Naive thymus-derived CD4-positive, alpha-beta T cell (primary cell): ENCODE measurements at regions of chr19 and their contacts with region 1.

Region 1: GRCh38 chr19:12551060-12551832 is at the start of gene ZNF564:
- DNase-seq: peak; percentile 74 to 97 (median 95)
- ATAC-seq: peak; percentile 99
- H3K4me3 ChIP-seq: peak within 1 kb of the TSS; percentile 88
- H3K4me3 Mint-ChIP-seq: peak within 1 kb of the TSS; percentile 89 to 100 (median 98)
- H3K27ac ChIP-seq: peak within 1 kb of the TSS; percentile 90
- H3K27ac Mint-ChIP-seq: peak within 1 kb of the TSS; percentile 92 to 98 (median 95)
- H3K4me1 ChIP-seq: peaks cover 8 to 28% of the 10 kb centered on the region in 2 donors
- H3K4me1 Mint-ChIP-seq: peaks cover 29 to 55% (median 47%) of the 10 kb centered on the region in 7 donors
- H3K27me3 ChIP-seq: no peaks in the 10 kb centered on the region
- H3K27me3 Mint-ChIP-seq: peaks cover 0 to 4% (median 0%) of the 10 kb centered on the region in 5 donors
- total RNA-seq, gene ZNF564: 10.5 to 33.6 (median 19.0) TPM

Region 2: GRCh38 chr19:11924886-11925650 is 626.2 kb before region 1 on chr19 and contains the start of gene ZNF700:
- CTCF ChIA-PET with region 1: no interaction called
- POLR2A ChIA-PET with region 1: no interaction called
- intact Hi-C with region 1: loop called in 1 of 2 experiments (anchors 5 kb)
- DNase-seq: peak; percentile 67 to 93 (median 90)
- ATAC-seq: peak; percentile 94
- H3K4me3 ChIP-seq: peak within 1 kb of the TSS; percentile 98
- H3K4me3 Mint-ChIP-seq: peak within 1 kb of the TSS; percentile 91 to 99 (median 98)
- H3K27ac ChIP-seq: peak within 1 kb of the TSS; percentile 75
- H3K27ac Mint-ChIP-seq: peak within 1 kb of the TSS; percentile 93 to 99 (median 98)
- H3K4me1 ChIP-seq: peaks cover 6 to 10% of the 10 kb centered on the region in 2 donors
- H3K4me1 Mint-ChIP-seq: peaks cover 26 to 56% (median 39%) of the 10 kb centered on the region in 7 donors
- H3K27me3 ChIP-seq: no peaks in the 10 kb centered on the region
- H3K27me3 Mint-ChIP-seq: no peaks in the 10 kb centered on the region
- total RNA-seq, gene ZNF700: 18.0 to 26.4 (median 22.8) TPM

Region 3: DNA sequence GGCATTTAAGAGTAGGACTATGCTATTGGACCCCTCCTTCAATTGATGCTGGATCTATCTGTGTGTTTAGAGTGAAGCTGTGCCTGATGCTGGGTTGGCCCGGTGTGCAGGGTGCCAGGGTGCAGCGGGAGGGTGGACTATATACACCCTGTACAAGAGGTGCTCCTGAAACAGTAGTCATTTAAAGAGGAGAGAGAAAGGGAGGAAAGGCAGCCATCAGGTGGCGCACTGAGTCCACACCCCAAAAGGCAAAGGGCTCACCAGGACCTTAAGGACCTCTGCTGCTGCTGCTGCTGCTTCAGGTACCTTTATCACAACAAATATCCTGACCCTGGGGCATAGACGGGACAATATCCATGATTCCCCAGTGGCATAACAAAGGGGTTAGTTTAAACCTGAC is 349.0 kb before region 1 on chr19:
- CTCF ChIA-PET with region 1: interaction called, 3 read pairs
- POLR2A ChIA-PET with region 1: no interaction called
- intact Hi-C with region 1: loop called in 1 of 2 experiments (anchors 1 kb)
- DNase-seq: peak in 8 of 9 donors; percentile 20 to 68 (median 46)
- ATAC-seq: peak; percentile 82
- H3K4me3 ChIP-seq: no peak overlapping the region
- H3K4me3 Mint-ChIP-seq: peak overlapping the region in 4 of 10 donors; percentile 3 to 54 (median 25)
- H3K27ac ChIP-seq: no peak overlapping the region
- H3K27ac Mint-ChIP-seq: peak overlapping the region in 6 of 9 donors; percentile 26 to 81 (median 61)
- H3K4me1 ChIP-seq: no peaks in the 10 kb centered on the region
- H3K4me1 Mint-ChIP-seq: peaks cover 6 to 53% (median 22%) of the 10 kb centered on the region in 7 donors
- H3K27me3 ChIP-seq: no peaks in the 10 kb centered on the region
- H3K27me3 Mint-ChIP-seq: no peaks in the 10 kb centered on the region

Region 4: DNA sequence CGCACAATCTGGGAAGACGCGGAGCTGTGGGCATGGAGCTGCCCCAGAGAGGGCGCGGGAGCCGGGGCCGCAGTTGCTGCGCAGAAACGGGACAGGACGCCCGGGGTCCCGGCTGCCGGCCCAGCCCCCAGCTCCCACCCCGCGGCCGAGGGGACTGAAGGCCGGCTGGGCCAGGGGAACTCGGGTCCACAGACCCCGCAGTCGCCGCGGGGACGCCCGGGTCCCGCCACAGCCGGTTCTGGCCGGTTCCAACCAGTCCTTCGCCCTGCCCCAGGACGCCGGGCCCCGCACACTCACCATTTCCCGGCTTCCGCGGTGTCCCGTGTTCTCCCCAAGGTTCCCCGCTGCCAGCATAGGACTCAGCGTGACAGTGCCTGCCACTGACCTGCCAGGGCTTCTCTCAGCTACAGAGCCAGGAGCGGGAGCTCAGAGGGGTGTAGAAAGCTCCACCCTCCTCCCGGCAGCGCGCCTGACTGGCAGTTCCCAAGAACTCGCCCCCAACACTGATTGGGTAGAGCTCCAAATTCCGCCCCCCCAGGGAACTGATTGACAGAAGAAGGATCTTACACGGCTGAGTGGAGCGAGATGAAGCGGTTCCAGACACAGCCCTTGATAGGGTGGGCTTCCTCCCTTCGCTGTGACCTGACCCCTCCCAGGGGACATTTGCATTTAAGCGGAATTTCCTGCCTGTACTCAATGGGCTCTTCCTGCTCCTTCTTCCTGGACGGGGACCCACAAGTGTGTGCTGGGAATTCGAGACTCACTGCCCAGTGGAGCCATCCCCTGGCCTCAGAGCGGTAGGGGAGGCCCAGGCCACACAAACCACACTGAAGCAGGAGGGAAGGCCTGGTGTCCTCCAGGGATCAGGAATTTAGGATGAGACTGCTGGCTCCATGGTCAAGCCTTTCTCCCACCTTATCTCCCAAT is 185.7 kb before region 1 on chr19 and contains the start of gene ZNF442:
- CTCF ChIA-PET with region 1: no interaction called
- POLR2A ChIA-PET with region 1: no interaction called
- intact Hi-C with region 1: loop called in 1 of 2 experiments (anchors 1 kb)
- DNase-seq: peak; percentile 56 to 88 (median 80)
- ATAC-seq: peak; percentile 99
- H3K4me3 ChIP-seq: peak within 1 kb of the TSS; percentile 66
- H3K4me3 Mint-ChIP-seq: peak within 1 kb of the TSS; percentile 92 to 99 (median 97)
- H3K27ac ChIP-seq: peak within 1 kb of the TSS; percentile 68
- H3K27ac Mint-ChIP-seq: peak within 1 kb of the TSS; percentile 68 to 91 (median 85)
- H3K4me1 ChIP-seq: peaks cover 7 to 10% of the 10 kb centered on the region in 2 donors
- H3K4me1 Mint-ChIP-seq: peaks cover 0 to 33% (median 24%) of the 10 kb centered on the region in 7 donors
- H3K27me3 ChIP-seq: no peaks in the 10 kb centered on the region
- H3K27me3 Mint-ChIP-seq: peaks cover 0 to 10% (median 0%) of the 10 kb centered on the region in 5 donors
- total RNA-seq, gene ZNF442: 0.44 to 6.0 (median 0.58) TPM

Region 5: GRCh38 chr19:12484371-12485051 is 66.7 kb before region 1 on chr19 and contains the start of gene ZNF709:
- CTCF ChIA-PET with region 1: no interaction called
- POLR2A ChIA-PET with region 1: no interaction called
- intact Hi-C with region 1: loop called (anchors 1 to 5 kb)
- DNase-seq: peak; percentile 75 to 89 (median 85)
- ATAC-seq: peak; percentile 99
- H3K4me3 ChIP-seq: peak within 1 kb of the TSS; percentile 98
- H3K4me3 Mint-ChIP-seq: peak within 1 kb of the TSS; percentile 90 to 99 (median 94)
- H3K27ac ChIP-seq: peak within 1 kb of the TSS; percentile 85
- H3K27ac Mint-ChIP-seq: peak within 1 kb of the TSS; percentile 87 to 97 (median 91)
- H3K4me1 ChIP-seq: peaks cover 0 to 14% of the 10 kb centered on the region in 2 donors
- H3K4me1 Mint-ChIP-seq: peaks cover 26 to 41% (median 33%) of the 10 kb centered on the region in 7 donors
- H3K27me3 ChIP-seq: no peaks in the 10 kb centered on the region
- H3K27me3 Mint-ChIP-seq: no peaks in the 10 kb centered on the region
- total RNA-seq, gene ZNF709: 2.2 to 8.0 (median 5.3) TPM

Region 6: GRCh38 chr19:12564016-12564664 is 12.9 kb after region 1 on chr19:
- CTCF ChIA-PET with region 1: interaction called, 4 read pairs
- POLR2A ChIA-PET with region 1: interaction called, 3 read pairs
- intact Hi-C with region 1: loop called in 1 of 2 experiments (anchors 1 kb)
- DNase-seq: peak; percentile 79 to 96 (median 88)
- ATAC-seq: peak; percentile 100
- H3K4me3 ChIP-seq: no peak overlapping the region
- H3K4me3 Mint-ChIP-seq: peak overlapping the region in 1 of 10 donors; percentile 33
- H3K27ac ChIP-seq: no peak overlapping the region
- H3K27ac Mint-ChIP-seq: peak overlapping the region in 2 of 9 donors; percentile 3 to 51
- H3K4me1 ChIP-seq: no peaks in the 10 kb centered on the region
- H3K4me1 Mint-ChIP-seq: peaks cover 0 to 6% (median 5%) of the 10 kb centered on the region in 7 donors
- H3K27me3 ChIP-seq: no peaks in the 10 kb centered on the region
- H3K27me3 Mint-ChIP-seq: no peaks in the 10 kb centered on the region

Region 7: GRCh38 chr19:12681074-12681951 is 130.1 kb after region 1 on chr19 and contains the start of gene DHPS:
- CTCF ChIA-PET with region 1: no interaction called
- POLR2A ChIA-PET with region 1: interaction called, 4 read pairs
- intact Hi-C with region 1: loop called in 1 of 2 experiments (anchors 1 kb)
- DNase-seq: peak; percentile 58 to 95 (median 93)
- ATAC-seq: peak; percentile 85
- H3K4me3 ChIP-seq: peak within 1 kb of the TSS; percentile 100
- H3K4me3 Mint-ChIP-seq: peak within 1 kb of the TSS; percentile 92 to 99 (median 96)
- H3K27ac ChIP-seq: peak within 1 kb of the TSS; percentile 95
- H3K27ac Mint-ChIP-seq: peak within 1 kb of the TSS; percentile 86 to 98 (median 94)
- H3K4me1 ChIP-seq: peaks cover 6 to 19% of the 10 kb centered on the region in 2 donors
- H3K4me1 Mint-ChIP-seq: peaks cover 18 to 34% (median 26%) of the 10 kb centered on the region in 7 donors
- H3K27me3 ChIP-seq: no peaks in the 10 kb centered on the region
- H3K27me3 Mint-ChIP-seq: no peaks in the 10 kb centered on the region
- total RNA-seq, gene DHPS: 125 to 223 (median 174) TPM